ENCODE measurements at regions of chr12 and their contacts with region 1.

Region 1: GRCh38 chr12:7933255-7933729 is 2.7 kb downstream of the SLC2A3 start:
- DNase-seq: peak; percentile 92
- H3K4me3 Mint-ChIP-seq: no peak overlapping the region
- H3K27ac Mint-ChIP-seq: no peak overlapping the region
- H3K4me1 Mint-ChIP-seq: peaks cover 4% of the 10 kb centered on the region
- H3K27me3 Mint-ChIP-seq: no peaks in the 10 kb centered on the region
- CTCF ChIP-seq: peak; percentile 55

Region 2: GRCh38 chr12:7884689-7885088 is 48.6 kb before region 1 on chr12:
- CTCF ChIA-PET with region 1: interaction called, 10 read pairs
- POLR2A ChIA-PET with region 1: no interaction called
- intact Hi-C with region 1: no loop called
- DNase-seq: no peak
- H3K4me3 Mint-ChIP-seq: no peak overlapping the region
- H3K27ac Mint-ChIP-seq: no peak overlapping the region
- H3K4me1 Mint-ChIP-seq: peaks cover 6% of the 10 kb centered on the region
- H3K27me3 Mint-ChIP-seq: no peaks in the 10 kb centered on the region
- CTCF ChIP-seq: no peak

Region 3: DNA sequence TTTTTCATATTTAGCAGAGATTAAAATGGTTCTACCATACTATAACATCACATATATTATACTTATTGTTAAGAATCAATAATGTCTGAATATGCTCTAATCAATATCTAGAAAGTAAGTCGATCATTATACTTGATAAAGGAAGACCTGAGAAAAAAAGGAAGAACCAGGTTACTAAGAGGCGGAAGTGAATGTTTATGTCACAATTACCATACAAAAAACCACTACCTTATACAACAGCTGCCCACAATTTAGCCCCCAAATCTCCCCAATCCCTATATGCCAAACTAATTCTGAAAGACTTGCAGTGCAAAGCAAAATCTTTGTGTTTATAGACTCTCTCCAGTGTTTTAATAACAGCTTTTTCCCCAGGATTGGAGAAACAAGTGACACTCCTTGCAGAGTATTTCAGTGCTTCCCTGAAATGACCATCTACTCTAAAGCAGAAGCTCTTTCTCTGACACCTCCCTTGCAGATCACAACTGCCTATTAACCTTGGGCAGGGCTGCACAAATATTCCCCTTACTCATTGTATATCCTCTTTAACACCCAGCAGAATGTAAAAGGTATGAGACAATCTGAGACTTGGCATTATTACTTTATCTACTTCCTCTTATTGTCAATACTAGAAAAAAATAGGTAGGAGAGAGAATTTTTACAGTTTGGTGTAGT is 15.4 kb after region 1 on chr12:
- CTCF ChIA-PET with region 1: interaction called, 10 read pairs
- POLR2A ChIA-PET with region 1: no interaction called
- intact Hi-C with region 1: no loop called
- DNase-seq: no peak
- H3K4me3 Mint-ChIP-seq: no peak overlapping the region
- H3K27ac Mint-ChIP-seq: no peak overlapping the region
- H3K4me1 Mint-ChIP-seq: no peaks in the 10 kb centered on the region
- H3K27me3 Mint-ChIP-seq: no peaks in the 10 kb centered on the region
- CTCF ChIP-seq: no peak

Region 4: GRCh38 chr12:7985802-7986418 is 52.6 kb after region 1 on chr12:
- CTCF ChIA-PET with region 1: interaction called, 11 read pairs
- POLR2A ChIA-PET with region 1: interaction called, 3 read pairs
- intact Hi-C with region 1: no loop called
- DNase-seq: no peak
- H3K4me3 Mint-ChIP-seq: no peak overlapping the region
- H3K27ac Mint-ChIP-seq: no peak overlapping the region
- H3K4me1 Mint-ChIP-seq: no peaks in the 10 kb centered on the region
- H3K27me3 Mint-ChIP-seq: no peaks in the 10 kb centered on the region
- CTCF ChIP-seq: no peak

Region 5: GRCh38 chr12:8078398-8078797 is 145.1 kb after region 1 on chr12:
- CTCF ChIA-PET with region 1: interaction called, 4 read pairs
- POLR2A ChIA-PET with region 1: no interaction called
- intact Hi-C with region 1: loop called (anchors 1 kb)
- DNase-seq: peak; percentile 57
- H3K4me3 Mint-ChIP-seq: no peak overlapping the region
- H3K27ac Mint-ChIP-seq: no peak overlapping the region
- H3K4me1 Mint-ChIP-seq: peaks cover 24% of the 10 kb centered on the region
- H3K27me3 Mint-ChIP-seq: no peaks in the 10 kb centered on the region
- CTCF ChIP-seq: peak; percentile 45